Mammary epithelial cell (primary cell): ENCODE measurements at regions of chr22 and their contacts with region 1.

Region 1: GRCh38 chr22:41915035-41915785 is at the start of gene SHISA8:
- DNase-seq: peak; percentile 32
- H3K4me3 ChIP-seq: peak within 1 kb of the TSS in 1 of 3 experiments; percentile 16
- H3K27ac ChIP-seq: no peak within 1 kb of the TSS
- H3K4me1 ChIP-seq: peaks cover 25% of the 10 kb centered on the region
- H3K27me3 ChIP-seq: peaks cover 40% of the 10 kb centered on the region
- CTCF ChIP-seq: no peak
- total RNA-seq, gene SHISA8: not detected

Region 2: DNA sequence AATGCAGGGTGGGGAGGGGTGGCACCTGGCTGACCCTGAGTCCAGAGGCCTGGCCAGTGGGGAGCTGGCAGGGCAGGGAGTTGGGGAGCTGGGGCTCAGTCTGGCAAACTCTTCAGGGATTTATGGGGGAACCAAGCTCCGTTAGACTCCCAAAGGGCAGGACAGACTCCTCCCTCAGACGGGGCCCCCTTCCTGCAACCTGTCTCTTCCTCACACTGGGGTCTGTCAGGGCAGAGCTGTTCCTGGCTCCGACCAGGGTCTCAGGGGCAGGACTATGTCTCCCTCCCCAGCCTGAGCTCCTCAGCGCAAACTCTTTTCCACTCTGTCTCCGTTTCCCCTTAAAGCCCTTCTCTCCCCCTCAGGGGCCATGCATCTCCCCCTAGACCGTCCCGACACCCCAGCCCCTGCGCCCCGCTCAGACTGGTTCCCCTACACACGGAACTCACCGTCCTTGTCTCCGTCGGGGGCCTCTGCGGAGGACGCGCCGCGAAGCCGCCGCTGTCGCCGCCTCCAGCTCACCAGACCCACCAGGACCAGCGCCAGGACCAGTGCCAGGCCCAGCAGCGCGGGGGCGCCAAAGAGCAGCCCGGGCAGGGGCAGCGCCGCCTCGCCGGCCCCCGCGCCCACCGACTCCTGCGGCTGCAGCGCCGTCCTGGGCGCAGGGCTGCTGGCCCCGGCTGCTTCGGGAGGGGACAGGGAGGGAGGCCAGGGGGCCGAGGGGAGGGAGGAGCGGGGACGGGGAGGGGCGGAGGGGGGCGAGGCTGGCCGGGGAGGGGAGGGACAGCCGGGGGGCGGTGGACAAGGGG is 10.6 kb after region 1 on chr22:
- CTCF ChIA-PET with region 1: interaction called, 20 read pairs
- dilution Hi-C with region 1: no loop called
- in situ Hi-C with region 1: no loop called
- intact Hi-C with region 1: no loop called
- DNase-seq: no peak
- H3K4me3 ChIP-seq: peak overlapping the region in 2 of 3 experiments; percentile 24 to 37
- H3K27ac ChIP-seq: no peak overlapping the region
- H3K4me1 ChIP-seq: peaks cover 7% of the 10 kb centered on the region
- H3K27me3 ChIP-seq: peaks cover 4% of the 10 kb centered on the region
- CTCF ChIP-seq: peak; percentile 60 to 68